ENCODE measurements at regions of chr9 and their contacts with region 1.

Region 1: DNA sequence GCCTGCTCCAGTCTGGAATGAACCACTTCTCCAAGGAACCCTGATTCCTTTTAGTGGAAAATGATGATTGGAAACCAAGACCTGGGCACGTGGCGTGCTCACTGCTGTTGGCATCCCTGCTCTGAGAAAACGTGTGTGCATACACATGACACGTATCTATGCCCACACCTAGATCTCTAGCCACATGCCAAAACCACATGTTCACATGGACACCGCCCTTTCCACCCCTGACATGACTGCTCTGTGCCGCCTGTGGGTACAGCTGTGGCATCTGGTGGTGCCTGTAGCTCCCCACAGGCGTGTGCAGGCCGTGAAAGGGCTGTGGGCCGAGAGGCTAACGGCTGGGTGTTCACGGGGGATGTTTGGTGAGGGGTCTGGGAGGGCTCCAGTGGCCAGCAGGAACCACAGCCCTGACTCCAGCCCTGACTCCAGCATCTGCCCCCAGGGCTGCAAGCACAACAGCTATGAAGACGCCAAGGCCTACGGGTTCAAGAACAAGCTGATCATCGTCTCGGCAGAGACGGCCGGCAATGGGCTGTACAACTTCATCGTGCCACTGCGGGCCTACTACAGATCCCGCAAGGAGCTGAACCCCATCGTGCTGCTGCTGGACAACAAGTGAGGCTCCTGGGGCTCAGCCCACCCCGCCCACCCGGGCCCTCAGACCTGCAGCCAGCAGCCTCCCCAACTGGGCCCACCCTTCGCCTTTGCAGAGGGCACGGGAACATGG is 75.1 kb downstream of the KCNT1 start:
- DNase-seq: no peak
- H3K4me3 ChIP-seq: no peak overlapping the region
- H3K27ac ChIP-seq: no peak overlapping the region
- H3K4me1 ChIP-seq: no peaks in the 10 kb centered on the region; a peak in 1 of 7 replicates
- H3K27me3 ChIP-seq: no peaks in the 10 kb centered on the region
- CTCF ChIP-seq: no peak
- EP300 ChIP-seq: no peak
- POLR2A ChIP-seq: no peak
- RAD21 ChIP-seq: no peak

Region 2: GRCh38 chr9:135797507-135798262 is 20.6 kb after region 1 on chr9:
- CTCF ChIA-PET with region 1: interaction called, 16 read pairs
- POLR2A ChIA-PET with region 1: no interaction called
- DNase-seq: peak; percentile 33 to 94
- H3K4me3 ChIP-seq: no peak overlapping the region
- H3K27ac ChIP-seq: no peak overlapping the region
- H3K4me1 ChIP-seq: no peaks in the 10 kb centered on the region; a peak in 1 of 7 replicates
- H3K27me3 ChIP-seq: no peaks in the 10 kb centered on the region
- CTCF ChIP-seq: peak in 2 of 3 experiments; percentile 86 to 94; a peak in 3 of 4 replicates
- EP300 ChIP-seq: no peak
- POLR2A ChIP-seq: no peak
- RAD21 ChIP-seq: peak; percentile 76 to 83

Measured in H1 (cell line).